ENCODE measurements at regions of chr3 and their contacts with region 1.

Region 1: GRCh38 chr3:141740349-141740748 is 2.3 kb downstream of the RNF7 start:
- DNase-seq: no peak
- H3K4me3 ChIP-seq: peak overlapping the region in 1 of 3 donors; percentile 29
- H3K27ac ChIP-seq: peak overlapping the region in 1 of 2 donors; percentile 14
- H3K4me1 ChIP-seq: no peaks in the 10 kb centered on the region
- H3K27me3 ChIP-seq: no peaks in the 10 kb centered on the region
- CTCF ChIP-seq: no peak
- POLR2A ChIP-seq: no peak

Region 2: GRCh38 chr3:141875374-141875892 is 135.1 kb after region 1 on chr3:
- intact Hi-C with region 1: loop called (anchors 2 kb)
- DNase-seq: peak; percentile 83 to 85
- H3K4me3 ChIP-seq: peak overlapping the region; percentile 82 to 87 (median 82)
- H3K27ac ChIP-seq: peak overlapping the region; percentile 99 to 100
- H3K4me1 ChIP-seq: no peaks in the 10 kb centered on the region
- H3K27me3 ChIP-seq: no peaks in the 10 kb centered on the region
- CTCF ChIP-seq: peak; percentile 65 to 88 (median 83)
- POLR2A ChIP-seq: no peak

Measured in breast epithelium (tissue), 4 donors.